ENCODE measurements at regions of chr10 and their contacts with region 1.

Region 1: DNA sequence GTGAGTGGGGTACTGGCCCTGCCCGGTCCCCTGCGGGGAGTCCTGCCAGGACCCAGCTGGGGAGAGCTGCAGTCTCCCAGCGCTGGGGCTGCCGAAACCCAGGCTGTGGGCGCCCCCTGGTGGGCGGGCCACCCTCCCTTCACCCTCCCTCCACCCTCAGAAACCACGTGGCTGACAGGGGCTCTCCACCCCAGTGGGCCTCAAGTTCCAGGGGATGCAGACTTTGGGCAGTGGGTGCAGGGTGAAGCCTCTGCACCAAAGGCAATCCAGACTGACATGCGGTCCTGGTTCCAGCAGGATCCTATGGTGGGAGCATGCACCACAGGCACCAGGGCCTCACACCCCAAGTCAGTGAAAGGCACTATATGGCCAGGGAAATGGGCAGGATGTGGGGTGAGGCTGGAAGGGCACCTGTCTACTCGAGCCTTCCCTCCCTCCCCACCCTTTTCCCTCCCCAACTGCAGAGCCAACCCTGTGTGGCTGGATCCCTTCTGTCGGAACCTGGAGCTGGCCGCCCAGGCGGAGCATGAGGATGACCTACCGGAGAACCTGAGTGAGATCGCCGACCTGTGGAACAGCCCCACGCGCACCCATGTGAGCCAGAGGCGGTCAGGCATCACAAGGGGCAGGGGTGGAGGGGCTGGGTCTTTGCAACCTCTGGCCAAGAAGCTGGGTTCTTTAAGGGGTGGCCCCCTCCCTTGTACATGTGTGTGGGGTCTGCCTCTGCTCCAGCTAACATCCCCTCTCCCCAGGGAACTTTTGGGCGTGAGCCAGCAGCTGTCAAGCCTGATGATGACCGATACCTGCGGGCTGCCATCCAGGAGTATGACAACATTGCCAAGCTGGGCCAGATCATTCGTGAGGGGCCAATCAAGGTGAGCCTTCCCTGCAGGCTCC is 38.8 kb downstream of the PSAP start:
- DNase-seq: peak in 1 of 2 donors; percentile 75
- H3K4me3 ChIP-seq: no peak overlapping the region
- H3K27ac ChIP-seq: no peak overlapping the region
- H3K4me1 ChIP-seq: no peaks in the 10 kb centered on the region
- H3K27me3 ChIP-seq: no peaks in the 10 kb centered on the region
- CTCF ChIP-seq: peak; percentile 73 to 82 (median 77)

Region 2: GRCh38 chr10:71314028-71314693 is 498.1 kb before region 1 on chr10:
- intact Hi-C with region 1: loop called (anchors 1 kb)
- DNase-seq: peak in 1 of 2 donors; percentile 72
- H3K4me3 ChIP-seq: no peak overlapping the region
- H3K27ac ChIP-seq: no peak overlapping the region
- H3K4me1 ChIP-seq: peaks cover 0 to 5% of the 10 kb centered on the region in 2 donors
- H3K27me3 ChIP-seq: no peaks in the 10 kb centered on the region
- CTCF ChIP-seq: peak; percentile 77 to 94 (median 87)

Region 3: GRCh38 chr10:71383972-71384687 is 428.1 kb before region 1 on chr10:
- intact Hi-C with region 1: loop called (anchors 5 kb)
- DNase-seq: peak in 1 of 2 donors; percentile 79
- H3K4me3 ChIP-seq: no peak overlapping the region
- H3K27ac ChIP-seq: no peak overlapping the region
- H3K4me1 ChIP-seq: no peaks in the 10 kb centered on the region
- H3K27me3 ChIP-seq: no peaks in the 10 kb centered on the region
- CTCF ChIP-seq: peak; percentile 84 to 91 (median 90)

Region 4: DNA sequence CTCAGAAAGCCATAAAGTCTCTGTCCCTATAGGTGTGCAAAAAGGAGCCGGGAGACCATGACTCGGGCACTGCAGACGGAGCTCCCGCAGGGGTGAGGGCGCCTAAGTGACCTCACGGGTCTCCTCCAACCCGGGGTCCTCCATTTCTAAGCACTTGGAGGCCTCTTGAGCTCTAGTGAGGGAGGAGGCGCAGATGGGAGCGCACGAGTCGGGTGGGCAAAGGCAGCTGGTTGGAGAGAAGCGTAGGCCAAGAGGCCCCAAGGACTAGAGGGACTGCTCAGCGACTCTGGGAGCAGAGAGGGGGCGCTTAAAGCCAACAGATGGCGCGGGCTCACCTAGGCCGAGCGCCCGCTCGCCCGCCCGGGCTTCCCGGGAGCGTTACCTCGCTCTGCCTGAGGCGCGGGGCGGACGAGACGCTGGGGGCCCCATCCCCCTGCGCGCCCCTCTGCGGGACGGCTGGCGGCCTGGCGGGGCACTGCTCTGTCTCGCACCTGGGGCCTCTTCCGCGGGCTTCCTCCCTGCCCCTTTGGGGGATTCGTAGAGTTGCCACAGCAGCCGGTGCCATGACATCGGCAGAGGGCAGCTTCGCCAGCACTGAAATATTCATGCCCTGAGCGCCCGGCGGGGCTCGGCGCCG is 416.1 kb before region 1 on chr10:
- intact Hi-C with region 1: loop called (anchors 5 kb)
- DNase-seq: no peak
- H3K4me3 ChIP-seq: peak overlapping the region; percentile 51 to 69
- H3K27ac ChIP-seq: no peak overlapping the region
- H3K4me1 ChIP-seq: peaks cover 10 to 17% of the 10 kb centered on the region in 2 donors
- H3K27me3 ChIP-seq: peaks cover 3% of the 10 kb centered on the region
- CTCF ChIP-seq: peak; percentile 17 to 46 (median 29)

Region 5: GRCh38 chr10:71795248-71795647 is 17.0 kb before region 1 on chr10:
- intact Hi-C with region 1: no loop called
- DNase-seq: no peak
- H3K4me3 ChIP-seq: no peak overlapping the region
- H3K27ac ChIP-seq: no peak overlapping the region
- H3K4me1 ChIP-seq: no peaks in the 10 kb centered on the region
- H3K27me3 ChIP-seq: no peaks in the 10 kb centered on the region
- CTCF ChIP-seq: no peak